ENCODE measurements at regions of chr7 and their contacts with region 1.

Region 1: DNA sequence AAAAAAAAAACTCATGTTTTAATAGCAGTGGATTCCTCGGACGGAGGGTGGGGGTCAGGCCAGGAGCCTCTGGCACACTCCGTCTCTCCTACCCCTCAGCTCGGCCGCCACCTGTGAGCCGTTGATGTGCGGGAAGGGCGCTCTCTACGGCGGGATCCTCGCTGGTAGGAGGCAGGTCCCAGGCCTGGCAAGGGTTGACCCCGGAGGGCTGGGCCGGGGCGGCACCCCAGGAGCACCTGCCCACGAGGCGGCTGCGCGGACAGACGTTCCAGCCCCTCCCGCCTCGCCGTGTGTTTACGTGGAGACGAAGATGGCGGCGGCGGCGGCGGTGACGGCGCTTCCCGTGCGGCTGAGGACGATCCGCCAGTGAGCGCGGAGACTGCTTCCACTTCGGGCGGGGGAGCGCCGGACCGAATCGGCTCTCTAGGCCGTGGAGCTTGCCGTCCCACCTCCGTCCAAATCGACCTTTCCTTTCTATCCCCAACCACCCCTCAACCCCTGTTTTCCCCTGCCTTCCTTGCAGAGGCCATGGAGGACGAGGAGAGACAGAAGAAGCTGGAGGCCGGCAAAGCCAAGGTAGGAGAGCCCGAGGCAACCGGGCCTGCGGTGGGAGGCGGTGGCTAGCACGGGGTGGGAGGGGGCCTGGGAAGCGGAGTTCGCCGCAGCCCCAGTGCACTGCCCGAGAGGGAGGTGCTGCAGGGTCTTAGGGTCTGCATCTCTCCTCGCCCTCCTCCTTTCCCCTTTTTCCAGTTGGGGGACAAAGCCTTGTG is at the start of gene AKAP9:
- DNase-seq: peak; percentile 91
- H3K4me3 ChIP-seq: peak within 1 kb of the TSS; percentile 93
- H3K27ac ChIP-seq: peak within 1 kb of the TSS; percentile 74
- H3K4me1 ChIP-seq: peaks cover 21% of the 10 kb centered on the region
- CTCF ChIP-seq: no peak
- total RNA-seq, gene AKAP9: 32.6 and 48.7 TPM in 2 replicates

Region 2: GRCh38 chr7:90403174-90404113 is 1537.3 kb before region 1 on chr7 and contains the start of gene CLDN12:
- CTCF ChIA-PET with region 1: no interaction called
- POLR2A ChIA-PET with region 1: no interaction called
- intact Hi-C with region 1: loop called (anchors 5 kb)
- DNase-seq: peak; percentile 82
- H3K4me3 ChIP-seq: peak within 1 kb of the TSS; percentile 80
- H3K27ac ChIP-seq: peak within 1 kb of the TSS; percentile 37
- H3K4me1 ChIP-seq: peaks cover 5% of the 10 kb centered on the region
- CTCF ChIP-seq: no peak
- total RNA-seq, gene CLDN12: 8.2 and 11.0 TPM in 2 replicates

Region 3: GRCh38 chr7:91973639-91974038 is 32.9 kb after region 1 on chr7:
- CTCF ChIA-PET with region 1: no interaction called
- POLR2A ChIA-PET with region 1: interaction called, 11 read pairs
- intact Hi-C with region 1: no loop called
- DNase-seq: no peak
- H3K4me3 ChIP-seq: no peak overlapping the region
- H3K27ac ChIP-seq: no peak overlapping the region
- H3K4me1 ChIP-seq: no peaks in the 10 kb centered on the region
- CTCF ChIP-seq: no peak

Region 4: DNA sequence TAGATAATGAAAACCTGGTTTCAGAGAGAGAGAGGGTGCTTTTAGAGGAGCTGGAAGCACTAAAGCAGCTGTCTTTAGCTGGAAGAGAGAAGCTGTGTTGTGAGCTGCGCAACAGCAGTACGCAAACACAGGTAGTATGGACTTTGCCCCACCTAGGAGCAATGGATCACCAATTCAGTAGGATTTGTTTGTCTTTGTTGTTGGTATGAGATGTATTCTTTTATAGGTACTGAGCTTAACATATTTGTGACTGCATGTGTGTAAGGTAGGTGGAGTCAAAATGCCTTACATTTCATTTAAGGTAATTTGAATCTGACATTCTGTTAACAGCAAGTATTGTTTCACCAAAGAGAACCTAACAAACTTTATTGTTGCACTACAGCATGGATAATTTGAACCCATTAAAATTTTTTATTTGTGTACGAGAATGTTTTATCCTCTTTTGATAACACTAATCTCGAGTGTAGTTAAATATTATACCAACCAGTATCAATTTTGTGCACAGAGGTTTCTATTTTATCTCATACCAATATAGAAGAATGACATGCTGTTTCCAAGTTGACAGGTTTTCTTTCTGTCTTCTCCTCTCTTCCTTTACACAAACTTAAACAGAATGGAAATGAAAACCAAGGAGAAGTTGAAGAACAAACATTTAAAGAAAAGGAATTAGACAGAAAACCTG is 101.4 kb after region 1 on chr7:
- CTCF ChIA-PET with region 1: no interaction called
- POLR2A ChIA-PET with region 1: no interaction called
- intact Hi-C with region 1: no loop called
- DNase-seq: no peak
- H3K4me3 ChIP-seq: no peak overlapping the region
- H3K27ac ChIP-seq: no peak overlapping the region
- H3K4me1 ChIP-seq: no peaks in the 10 kb centered on the region
- CTCF ChIP-seq: no peak

Region 5: GRCh38 chr7:92134271-92135051 is 193.7 kb after region 1 on chr7 and contains the start of gene CYP51A1:
- CTCF ChIA-PET with region 1: no interaction called
- POLR2A ChIA-PET with region 1: interaction called, 4 read pairs
- intact Hi-C with region 1: loop called (anchors 1 kb)
- DNase-seq: peak; percentile 94
- H3K4me3 ChIP-seq: peak within 1 kb of the TSS; percentile 92
- H3K27ac ChIP-seq: peak within 1 kb of the TSS; percentile 68
- H3K4me1 ChIP-seq: peaks cover 40% of the 10 kb centered on the region
- CTCF ChIP-seq: 0 out of 2 replicates have a peak, but pooled peaks have one; percentile 22
- total RNA-seq, gene CYP51A1: 51.7 and 53.4 TPM in 2 replicates

Region 6: GRCh38 chr7:92415225-92415624 is 474.5 kb after region 1 on chr7:
- CTCF ChIA-PET with region 1: no interaction called
- POLR2A ChIA-PET with region 1: no interaction called
- intact Hi-C with region 1: no loop called
- DNase-seq: no peak
- H3K4me3 ChIP-seq: no peak overlapping the region
- H3K27ac ChIP-seq: no peak overlapping the region
- H3K4me1 ChIP-seq: no peaks in the 10 kb centered on the region
- CTCF ChIP-seq: no peak

Region 7: DNA sequence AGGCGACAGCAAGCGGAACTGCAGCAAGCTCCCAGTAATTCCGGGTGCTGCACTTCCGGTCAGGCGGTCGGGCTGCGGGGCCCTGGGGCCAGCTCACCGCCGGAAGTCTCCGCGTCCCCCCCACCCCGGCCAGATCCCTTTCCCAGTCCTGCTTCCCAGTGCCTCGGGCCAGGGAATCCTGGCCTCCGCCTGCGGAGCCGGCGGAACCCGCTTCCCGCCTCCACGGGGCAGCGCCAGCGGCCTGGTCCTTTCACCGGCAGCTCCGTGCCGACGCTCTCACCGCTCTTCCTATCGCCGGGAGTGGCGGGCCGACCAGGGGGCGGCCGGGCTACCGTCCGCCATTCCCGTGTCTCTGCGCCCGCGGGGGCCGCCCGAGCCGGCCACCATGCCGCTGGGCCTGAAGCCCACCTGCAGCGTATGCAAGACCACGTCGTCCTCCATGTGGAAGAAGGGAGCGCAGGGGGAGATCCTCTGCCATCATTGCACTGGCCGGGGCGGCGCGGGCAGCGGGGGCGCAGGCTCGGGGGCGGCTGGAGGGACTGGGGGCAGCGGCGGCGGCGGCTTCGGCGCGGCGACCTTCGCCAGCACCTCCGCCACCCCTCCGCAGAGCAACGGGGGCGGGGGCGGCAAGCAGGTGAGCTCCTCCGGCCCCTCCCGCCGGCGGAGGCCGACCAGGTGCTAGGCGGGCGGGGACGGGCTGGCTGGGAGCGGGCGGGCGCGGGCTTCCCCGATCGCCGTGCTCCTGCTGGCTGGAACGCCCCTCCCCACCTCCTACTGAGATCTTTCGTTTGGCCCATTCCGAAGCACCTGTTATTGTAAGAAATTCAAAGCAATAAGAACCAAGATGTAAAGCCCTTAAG is 506.8 kb after region 1 on chr7 and contains the start of gene GATAD1:
- CTCF ChIA-PET with region 1: no interaction called
- POLR2A ChIA-PET with region 1: interaction called, 26 read pairs
- intact Hi-C with region 1: no loop called
- DNase-seq: peak; percentile 92
- H3K4me3 ChIP-seq: peak within 1 kb of the TSS; percentile 90
- H3K27ac ChIP-seq: peak within 1 kb of the TSS; percentile 68
- H3K4me1 ChIP-seq: peaks cover 5% of the 10 kb centered on the region
- CTCF ChIP-seq: peak; percentile 86
- total RNA-seq, gene GATAD1: 15.5 and 19.6 TPM in 2 replicates

Measured in OCI-LY7 (cell line).